ENCODE measurements at regions of chr2 and their contacts with region 1.

Region 1: DNA sequence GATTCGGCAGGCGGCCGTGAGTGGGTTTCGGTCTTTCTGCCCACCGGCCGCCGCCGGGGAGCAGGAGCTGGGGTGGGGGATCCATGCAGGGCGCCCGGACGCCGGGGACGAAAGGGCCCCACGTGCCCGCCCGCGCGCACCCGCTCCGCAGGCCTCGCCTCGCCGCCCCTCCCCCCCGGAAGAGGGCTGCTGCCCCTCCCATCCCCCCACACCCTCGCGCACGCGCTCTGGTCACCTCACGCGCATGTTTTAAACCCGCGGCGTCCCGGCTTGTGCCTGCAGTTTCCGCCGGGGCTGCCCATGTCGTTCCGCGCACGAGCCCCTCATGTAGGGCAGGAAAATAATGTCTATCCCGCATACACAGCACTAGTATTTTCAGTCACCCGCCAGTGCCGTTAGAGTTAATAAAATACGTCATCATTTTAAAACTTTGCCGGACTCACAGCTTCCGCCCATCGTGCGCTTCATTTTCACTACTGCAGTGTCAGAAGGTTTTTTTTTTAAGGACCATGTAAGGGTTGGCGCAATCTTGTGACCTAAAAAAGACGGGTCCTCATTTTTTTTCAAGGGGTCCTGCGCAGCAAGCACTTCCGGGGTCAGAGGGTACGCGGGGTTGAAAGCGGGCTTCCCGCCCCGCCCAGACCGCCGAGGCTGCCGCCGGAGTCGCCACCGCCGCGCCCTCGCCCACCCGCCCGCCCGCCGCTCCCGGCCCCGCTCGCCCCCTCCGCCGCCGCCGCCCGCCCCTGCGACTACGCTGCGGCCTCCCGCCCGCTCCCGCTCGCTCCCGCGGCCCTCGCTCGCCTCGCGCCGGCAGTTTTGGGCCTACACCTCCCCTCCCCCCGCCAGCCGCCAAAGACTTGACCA is at the start of gene PCBP1:
- DNase-seq: peak; percentile 99
- ATAC-seq: peak; percentile 91
- total RNA-seq, gene PCBP1: 211 TPM

Region 2: GRCh38 chr2:70142590-70143313 is 55.7 kb after region 1 on chr2:
- intact Hi-C with region 1: loop called (anchors 5 kb)
- DNase-seq: peak; percentile 100
- ATAC-seq: peak; percentile 88

Region 3: GRCh38 chr2:70541481-70542020 is 454.5 kb after region 1 on chr2:
- intact Hi-C with region 1: no loop called
- DNase-seq: no peak
- ATAC-seq: no peak